Common myeloid progenitor, CD34-positive (primary cell): ENCODE measurements at regions of chr22 and their contacts with region 1.

Region 1: DNA sequence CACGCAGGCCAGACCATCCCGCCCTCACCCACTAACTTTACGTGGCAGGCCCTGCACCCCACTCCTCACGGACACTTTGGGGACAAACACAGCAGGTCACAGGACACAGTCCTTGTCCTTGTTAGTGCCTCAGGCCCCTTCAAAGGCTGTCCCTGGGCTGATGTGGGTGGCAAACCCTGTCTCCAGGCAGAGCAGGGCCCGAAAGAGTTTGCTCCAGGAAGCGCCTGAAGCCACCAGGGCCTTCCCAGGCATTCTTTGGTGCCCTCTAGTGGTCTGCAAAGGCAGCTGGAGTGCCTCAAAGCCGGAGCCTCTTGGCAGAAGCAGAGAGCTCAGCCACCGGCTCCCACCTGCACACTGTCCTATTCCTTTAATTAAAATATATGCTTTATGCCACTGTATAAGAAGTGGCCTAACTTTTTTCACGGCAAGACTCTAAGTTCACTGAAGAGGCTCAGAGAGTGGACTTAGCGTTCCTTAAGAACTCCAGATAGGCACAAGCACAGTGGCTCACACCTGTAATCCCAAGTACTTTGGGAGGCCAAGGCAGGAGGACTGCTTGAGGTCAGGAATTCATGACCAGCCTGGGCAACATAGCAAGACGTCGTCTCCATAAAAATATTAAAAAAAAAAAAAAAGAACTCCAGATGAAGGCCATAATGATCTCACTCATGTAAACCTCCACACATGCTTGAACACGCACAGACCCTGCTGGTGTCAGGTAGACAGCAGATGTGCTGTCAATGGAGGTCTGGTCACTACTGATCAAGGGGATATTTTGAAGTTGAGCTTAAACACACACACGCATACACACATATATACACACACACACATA is 11.1 kb downstream of the TXN2 start:
- DNase-seq: peak; percentile 85 to 92 (median 90)
- H3K4me3 ChIP-seq: peak overlapping the region in 1 of 7 experiments; percentile 20
- H3K27ac ChIP-seq: peak overlapping the region in 1 of 2 experiments; percentile 38
- H3K4me1 ChIP-seq: peaks cover 3 to 62% (median 49%) of the 10 kb centered on the region in 4 experiments
- H3K27me3 ChIP-seq: no peaks in the 10 kb centered on the region

Region 2: GRCh38 chr22:36329254-36330078 is 140.9 kb before region 1 on chr22:
- CTCF ChIA-PET with region 1: interaction called, 16 read pairs
- POLR2A ChIA-PET with region 1: interaction called, 3 read pairs
- DNase-seq: peak; percentile 87 to 98 (median 97)
- H3K4me3 ChIP-seq: peak overlapping the region in 4 of 7 experiments; percentile 7 to 54 (median 42)
- H3K27ac ChIP-seq: peak overlapping the region; percentile 81 to 89
- H3K4me1 ChIP-seq: peaks cover 27 to 73% (median 71%) of the 10 kb centered on the region in 4 experiments
- H3K27me3 ChIP-seq: no peaks in the 10 kb centered on the region

Region 3: DNA sequence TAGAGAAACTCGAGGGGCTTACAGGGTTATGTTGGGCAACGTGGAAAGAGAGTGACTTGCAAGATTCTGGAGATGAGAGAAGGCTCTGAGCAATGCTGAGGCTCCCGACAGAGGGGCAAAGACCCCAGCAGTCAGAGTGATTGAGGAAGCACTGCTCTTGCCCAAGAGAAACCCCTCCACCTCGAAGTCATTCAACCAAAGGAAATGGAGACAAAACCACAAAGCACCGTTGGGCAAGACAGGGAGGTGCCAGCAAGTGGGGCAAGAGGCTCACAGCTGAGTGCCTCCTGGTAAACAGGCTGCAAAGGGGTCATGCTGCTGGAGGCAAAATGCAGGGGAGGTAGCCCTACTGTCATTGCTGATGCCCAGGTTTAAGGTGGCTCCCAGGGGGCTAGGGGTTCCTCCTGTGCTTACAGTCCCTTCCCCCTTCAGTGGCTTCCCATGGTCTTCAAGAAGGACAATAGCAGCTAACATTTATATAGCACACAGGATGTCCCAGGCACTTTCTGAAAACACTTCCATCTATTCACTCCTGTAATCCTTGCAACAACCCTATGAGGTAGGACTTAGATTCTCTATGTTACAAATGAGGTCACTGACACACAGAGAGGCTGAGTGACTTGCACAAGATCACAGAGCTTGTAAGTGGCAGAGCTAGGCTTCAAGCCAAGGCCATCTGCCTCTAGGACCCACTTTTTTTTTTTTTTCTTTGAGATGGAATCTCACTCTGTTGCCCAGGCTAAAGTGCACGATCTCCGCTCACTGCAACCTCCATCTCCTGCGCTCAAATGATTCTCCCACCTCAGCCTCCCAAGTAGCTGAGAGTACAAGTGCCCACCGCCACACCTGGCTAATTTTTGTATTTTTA is 64.5 kb before region 1 on chr22:
- CTCF ChIA-PET with region 1: interaction called, 15 read pairs
- POLR2A ChIA-PET with region 1: interaction called, 4 read pairs
- DNase-seq: peak; percentile 88 to 98 (median 97)
- H3K4me3 ChIP-seq: peak overlapping the region in 4 of 7 experiments; percentile 20 to 53 (median 36)
- H3K27ac ChIP-seq: peak overlapping the region; percentile 13 to 73
- H3K4me1 ChIP-seq: peaks cover 12 to 47% (median 45%) of the 10 kb centered on the region in 4 experiments
- H3K27me3 ChIP-seq: no peaks in the 10 kb centered on the region

Region 4: DNA sequence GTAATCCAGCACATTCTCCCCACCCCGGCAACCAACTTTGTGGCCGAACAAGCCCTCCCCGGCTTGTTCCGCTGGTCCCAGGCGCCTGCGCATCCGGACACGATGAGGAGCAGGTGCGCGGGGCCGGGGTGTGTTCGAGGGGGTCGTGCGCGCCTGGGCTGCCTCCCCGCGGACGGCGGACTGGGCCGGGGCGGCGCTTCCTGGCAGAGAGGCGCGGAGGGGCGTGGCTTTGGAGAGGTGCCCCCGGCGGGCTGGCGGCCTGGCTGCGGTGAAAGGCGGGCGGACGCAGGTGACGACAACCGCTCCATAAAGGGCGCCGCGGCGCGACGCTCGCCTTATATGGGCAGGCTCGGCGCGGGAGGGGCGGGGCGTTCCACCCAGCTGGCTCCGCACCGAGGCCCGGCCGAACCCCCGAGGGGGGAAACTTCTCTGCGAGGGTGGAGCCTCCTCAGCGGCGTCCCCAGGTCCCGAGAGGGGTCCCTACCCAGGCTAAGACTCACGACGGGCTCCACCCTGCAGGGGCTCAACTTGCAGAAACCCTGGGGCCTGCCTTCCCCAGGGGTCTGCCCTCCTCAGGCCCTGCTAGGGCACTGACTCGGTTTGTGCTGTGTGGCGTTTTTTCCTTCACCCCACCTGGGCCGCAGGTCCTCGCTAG is 15.3 kb before region 1 on chr22:
- CTCF ChIA-PET with region 1: interaction called, 25 read pairs
- POLR2A ChIA-PET with region 1: interaction called, 9 read pairs
- DNase-seq: peak; percentile 92 to 96 (median 95)
- H3K4me3 ChIP-seq: peak overlapping the region; percentile 19 to 70 (median 58)
- H3K27ac ChIP-seq: peak overlapping the region in 1 of 2 experiments; percentile 79
- H3K4me1 ChIP-seq: peaks cover 20 to 70% (median 57%) of the 10 kb centered on the region in 4 experiments
- H3K27me3 ChIP-seq: no peaks in the 10 kb centered on the region

Region 5: GRCh38 chr22:36481393-36482168 is 11.2 kb after region 1 on chr22 and contains the start of gene TXN2:
- CTCF ChIA-PET with region 1: interaction called, 19 read pairs
- POLR2A ChIA-PET with region 1: interaction called, 3 read pairs
- DNase-seq: peak; percentile 96 to 99 (median 98)
- H3K4me3 ChIP-seq: peak within 1 kb of the TSS; percentile 74 to 99 (median 89)
- H3K27ac ChIP-seq: peak within 1 kb of the TSS; percentile 75 to 90
- H3K4me1 ChIP-seq: peaks cover 7 to 19% (median 16%) of the 10 kb centered on the region in 4 experiments
- H3K27me3 ChIP-seq: no peaks in the 10 kb centered on the region